Heart right ventricle (tissue), 16 donors: ENCODE measurements at regions of chr3 and their contacts with region 1.

Region 1: GRCh38 chr3:33119891-33120290 is 6.1 kb downstream of the CRTAP start:
- DNase-seq: no peak
- ATAC-seq: peak in 2 of 8 donors; percentile 17 to 46
- H3K4me3 ChIP-seq: no peak overlapping the region
- H3K27ac ChIP-seq: peak overlapping the region in 1 of 10 donors; percentile 15
- H3K4me1 ChIP-seq: peaks cover 0 to 44% (median 7%) of the 10 kb centered on the region in 9 donors
- H3K27me3 ChIP-seq: no peaks in the 10 kb centered on the region
- CTCF ChIP-seq: no peak

Region 2: GRCh38 chr3:33074217-33075067 is 45.4 kb before region 1 on chr3:
- intact Hi-C with region 1: loop called in 1 of 10 experiments (anchors 2 kb)
- DNase-seq: peak; percentile 29 to 47
- ATAC-seq: peak in 6 of 8 donors; percentile 42 to 79 (median 65)
- H3K4me3 ChIP-seq: no peak overlapping the region
- H3K27ac ChIP-seq: no peak overlapping the region
- H3K4me1 ChIP-seq: peaks cover 0 to 10% (median 0%) of the 10 kb centered on the region in 9 donors
- H3K27me3 ChIP-seq: no peaks in the 10 kb centered on the region
- CTCF ChIP-seq: peak; percentile 69 to 90 (median 80)

Region 3: GRCh38 chr3:33167716-33168336 is 47.9 kb after region 1 on chr3:
- intact Hi-C with region 1: no loop called
- DNase-seq: no peak
- ATAC-seq: no peak
- H3K4me3 ChIP-seq: no peak overlapping the region
- H3K27ac ChIP-seq: no peak overlapping the region
- H3K4me1 ChIP-seq: peaks cover 0 to 18% (median 5%) of the 10 kb centered on the region in 9 donors
- H3K27me3 ChIP-seq: no peaks in the 10 kb centered on the region
- CTCF ChIP-seq: no peak